H1 (cell line): ENCODE measurements at regions of chr1 and their contacts with region 1.

Region 1: DNA sequence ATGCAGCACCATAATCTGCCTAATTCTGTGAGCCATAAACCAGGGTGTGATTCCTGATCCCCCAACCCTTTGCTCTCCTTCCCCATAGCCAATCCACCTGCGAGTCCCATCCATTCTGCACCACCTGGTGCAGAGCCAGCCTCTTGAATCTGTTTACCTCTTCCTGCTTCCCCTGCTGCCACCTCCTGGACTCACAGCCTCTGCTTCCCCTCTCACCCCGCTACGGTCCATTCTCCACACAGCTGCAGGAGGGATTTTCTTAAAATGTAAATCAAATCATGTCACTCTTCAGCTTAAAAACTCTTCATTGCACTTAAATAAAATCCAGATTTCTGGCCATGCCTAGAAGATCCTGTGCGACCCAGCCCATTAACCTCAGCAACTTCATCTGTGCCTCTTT is 186.7 kb downstream of the FOXD2 start:
- DNase-seq: peak; percentile 29 to 55
- H3K4me3 ChIP-seq: no peak overlapping the region
- H3K27ac ChIP-seq: no peak overlapping the region
- H3K4me1 ChIP-seq: no peaks in the 10 kb centered on the region; a peak in 1 of 7 replicates
- H3K27me3 ChIP-seq: peaks cover 0 to 2% (median 0%) of the 10 kb centered on the region in 4 experiments; a peak in 2 of 7 replicates
- CTCF ChIP-seq: peak; percentile 83 to 99 (median 91)
- EP300 ChIP-seq: no peak
- POLR2A ChIP-seq: no peak
- RAD21 ChIP-seq: peak; percentile 84 to 86

Region 2: GRCh38 chr1:47532921-47533792 is 91.4 kb before region 1 on chr1:
- CTCF ChIA-PET with region 1: interaction called, 151 read pairs
- POLR2A ChIA-PET with region 1: no interaction called
- DNase-seq: peak in 1 of 2 experiments; percentile 84
- H3K4me3 ChIP-seq: peak overlapping the region; percentile 48 to 67 (median 58)
- H3K27ac ChIP-seq: no peak overlapping the region
- H3K4me1 ChIP-seq: peaks cover 3 to 10% (median 7%) of the 10 kb centered on the region in 4 experiments
- H3K27me3 ChIP-seq: peaks cover 0 to 7% (median 4%) of the 10 kb centered on the region in 4 experiments; a peak in 2 of 7 replicates
- CTCF ChIP-seq: 0 out of 4 replicates have a peak, but pooled peaks of 1 of the 3 experiments have one; percentile 2
- EP300 ChIP-seq: no peak
- POLR2A ChIP-seq: no peak
- RAD21 ChIP-seq: no peak

Region 3: DNA sequence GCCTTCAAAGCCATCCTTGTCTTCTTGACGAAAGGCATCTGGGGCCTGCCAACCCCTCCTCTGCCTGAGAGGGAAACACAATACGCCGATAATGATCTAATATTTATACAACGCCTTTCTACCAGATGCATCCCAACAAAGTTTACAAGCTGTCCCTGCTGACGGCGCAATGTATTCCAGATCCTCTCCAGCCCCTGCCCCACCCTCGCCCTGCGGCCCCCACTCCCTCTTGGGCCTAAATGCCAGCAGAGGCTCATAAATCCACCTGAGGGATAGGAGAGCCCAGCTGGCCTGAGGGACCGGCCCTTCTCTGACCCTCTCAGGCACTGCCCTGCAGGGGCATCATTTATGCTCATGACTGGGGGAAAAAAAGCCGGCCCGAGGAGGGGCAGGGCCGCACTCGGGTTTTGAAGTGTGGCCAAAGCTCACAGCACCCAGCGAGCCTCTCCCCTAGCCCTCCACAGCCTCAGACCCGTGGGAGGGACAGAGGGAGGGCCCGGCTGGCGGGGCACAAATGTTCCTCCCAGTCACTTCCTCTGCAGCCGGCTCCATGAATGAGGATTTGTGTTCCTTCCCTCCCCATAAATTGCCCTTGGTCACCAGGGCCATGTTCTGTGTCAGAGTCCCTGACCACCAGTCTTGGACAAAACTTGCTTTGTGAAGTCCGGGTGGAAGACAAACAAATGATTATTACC is 46.4 kb before region 1 on chr1:
- CTCF ChIA-PET with region 1: interaction called, 12 read pairs
- POLR2A ChIA-PET with region 1: no interaction called
- DNase-seq: no peak
- H3K4me3 ChIP-seq: no peak overlapping the region
- H3K27ac ChIP-seq: no peak overlapping the region
- H3K4me1 ChIP-seq: peaks cover 4 to 17% (median 9%) of the 10 kb centered on the region in 4 experiments
- H3K27me3 ChIP-seq: no peaks in the 10 kb centered on the region
- CTCF ChIP-seq: no peak
- EP300 ChIP-seq: no peak
- POLR2A ChIP-seq: no peak
- RAD21 ChIP-seq: no peak

Region 4: GRCh38 chr1:47655521-47656300 is 31.2 kb after region 1 on chr1:
- CTCF ChIA-PET with region 1: interaction called, 17 read pairs
- POLR2A ChIA-PET with region 1: no interaction called
- DNase-seq: no peak
- H3K4me3 ChIP-seq: no peak overlapping the region
- H3K27ac ChIP-seq: no peak overlapping the region
- H3K4me1 ChIP-seq: no peaks in the 10 kb centered on the region
- H3K27me3 ChIP-seq: peaks cover 2 to 14% (median 5%) of the 10 kb centered on the region in 4 experiments; a peak in 5 of 7 replicates
- CTCF ChIP-seq: no peak
- EP300 ChIP-seq: no peak
- POLR2A ChIP-seq: no peak
- RAD21 ChIP-seq: no peak

Region 5: GRCh38 chr1:47859092-47859743 is 234.7 kb after region 1 on chr1:
- CTCF ChIA-PET with region 1: no interaction called
- POLR2A ChIA-PET with region 1: no interaction called
- DNase-seq: no peak
- H3K4me3 ChIP-seq: no peak overlapping the region
- H3K27ac ChIP-seq: no peak overlapping the region
- H3K4me1 ChIP-seq: no peaks in the 10 kb centered on the region; a peak in 2 of 7 replicates
- H3K27me3 ChIP-seq: no peaks in the 10 kb centered on the region
- CTCF ChIP-seq: no peak
- EP300 ChIP-seq: no peak
- POLR2A ChIP-seq: no peak
- RAD21 ChIP-seq: no peak